K562 (cell line): ENCODE measurements at regions of chr1 and their contacts with region 1.

Region 1: DNA sequence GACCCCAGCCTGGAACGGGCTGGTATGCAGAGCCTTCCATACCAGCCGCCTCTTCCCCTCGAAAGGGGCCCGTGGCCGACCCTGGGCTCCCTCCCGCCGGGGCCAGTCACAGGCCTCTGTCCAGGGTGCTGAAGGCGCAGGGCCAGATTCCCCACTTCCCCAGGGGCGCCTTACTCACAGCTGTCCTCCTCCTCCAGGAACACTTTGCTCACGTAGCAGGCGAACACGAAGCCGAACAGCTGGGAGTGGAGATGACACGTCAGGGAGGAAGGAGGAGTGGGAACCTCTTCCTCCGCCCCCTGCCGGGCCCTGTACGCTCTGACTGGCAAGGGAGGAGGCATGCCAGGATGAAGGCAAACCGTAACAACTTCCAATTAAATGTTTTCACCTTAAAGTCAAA is 57.3 kb downstream of the NKAIN1 start:
- DNase-seq: peak; percentile 85 to 93 (median 89)
- ATAC-seq: peak; percentile 88
- H3K4me3 ChIP-seq: peak overlapping the region; percentile 37
- H3K27ac ChIP-seq: no peak overlapping the region
- H3K4me1 ChIP-seq: peaks cover 16% of the 10 kb centered on the region in 2 experiments; a peak in 4 of 5 replicates
- H3K27me3 ChIP-seq: peaks cover 21 to 28% of the 10 kb centered on the region in 2 experiments
- CTCF ChIP-seq: peak in 2 of 3 experiments; percentile 23 to 47; a peak in 3 of 6 replicates
- EP300 ChIP-seq: no peak
- POLR2A ChIP-seq: no peak
- RAD21 ChIP-seq: peak in 1 of 2 experiments; percentile 30; a peak in 2 of 4 replicates

Region 2: GRCh38 chr1:31161571-31161970 is 20.8 kb before region 1 on chr1:
- CTCF ChIA-PET with region 1: interaction called, 10 read pairs
- POLR2A ChIA-PET with region 1: interaction called, 4 read pairs
- in situ Hi-C with region 1: no loop called
- intact Hi-C with region 1: no loop called
- DNase-seq: peak in 1 of 4 experiments; percentile 17
- ATAC-seq: peak; percentile 25
- H3K4me3 ChIP-seq: no peak overlapping the region
- H3K27ac ChIP-seq: peak overlapping the region; percentile 31; the same call in 1 of the 3 replicates
- H3K4me1 ChIP-seq: peaks cover 27 to 37% of the 10 kb centered on the region in 2 experiments
- H3K27me3 ChIP-seq: no peaks in the 10 kb centered on the region
- CTCF ChIP-seq: no peak
- EP300 ChIP-seq: no peak
- POLR2A ChIP-seq: no peak
- RAD21 ChIP-seq: no peak

Region 3: DNA sequence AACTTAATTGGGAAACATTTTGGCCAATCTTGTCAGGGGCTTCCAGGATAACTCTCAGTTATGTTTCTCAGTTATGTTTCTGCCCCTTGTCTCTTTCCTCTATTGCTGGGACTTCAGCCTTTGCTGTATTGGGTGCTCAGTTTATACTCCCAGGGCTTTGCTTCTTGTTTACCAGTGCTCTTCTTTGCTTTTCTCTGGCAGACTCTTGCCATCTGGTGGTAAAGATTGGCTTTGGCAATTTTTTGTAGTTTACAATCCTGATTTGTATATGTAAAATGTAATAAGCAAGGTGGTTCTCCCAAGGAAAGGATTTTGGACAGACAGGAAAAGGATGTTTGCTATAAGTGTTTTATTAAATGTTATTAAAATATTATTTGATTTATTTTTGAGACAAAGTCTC is 152.7 kb after region 1 on chr1:
- CTCF ChIA-PET with region 1: interaction called, 11 read pairs
- POLR2A ChIA-PET with region 1: no interaction called
- in situ Hi-C with region 1: no loop called
- intact Hi-C with region 1: loop called (anchors 1 kb)
- DNase-seq: peak in 2 of 4 experiments; percentile 13 to 24
- ATAC-seq: peak; percentile 72
- H3K4me3 ChIP-seq: no peak overlapping the region
- H3K27ac ChIP-seq: no peak overlapping the region
- H3K4me1 ChIP-seq: no peaks in the 10 kb centered on the region
- H3K27me3 ChIP-seq: no peaks in the 10 kb centered on the region
- CTCF ChIP-seq: peak; percentile 46 to 69 (median 47); a peak in 5 of 6 replicates
- EP300 ChIP-seq: no peak
- POLR2A ChIP-seq: no peak
- RAD21 ChIP-seq: peak; percentile 45 to 63

Region 4: DNA sequence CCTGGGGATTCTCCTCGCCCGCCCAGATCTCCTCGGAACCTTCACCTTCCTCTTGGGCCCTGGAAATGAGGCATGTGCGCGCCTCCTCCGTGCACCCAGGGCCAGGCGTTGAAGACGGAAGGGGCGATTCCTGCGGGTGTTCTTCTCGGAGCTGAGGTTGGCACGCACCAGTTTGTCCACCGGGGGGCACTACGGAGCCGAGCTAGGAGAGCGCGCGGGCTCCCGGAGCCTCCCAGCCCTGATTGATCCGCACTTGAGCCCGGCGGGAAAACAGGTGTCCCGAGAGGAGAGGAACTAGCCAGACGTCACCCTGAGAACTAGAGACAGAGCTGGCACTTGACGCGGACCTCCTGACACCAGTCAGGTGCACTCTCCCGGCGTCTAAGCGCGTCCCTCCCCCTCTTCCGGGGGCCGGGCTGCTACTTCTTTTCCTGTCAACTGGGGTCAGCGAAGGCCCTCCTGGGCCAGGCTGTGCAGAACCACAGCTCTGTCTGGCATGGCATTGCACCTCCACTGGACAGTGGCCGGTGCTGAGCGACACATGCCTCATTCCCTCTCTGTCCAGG is 212.4 kb after region 1 on chr1:
- CTCF ChIA-PET with region 1: interaction called, 4 read pairs
- POLR2A ChIA-PET with region 1: no interaction called
- in situ Hi-C with region 1: no loop called
- intact Hi-C with region 1: loop called (anchors 10 kb)
- DNase-seq: peak; percentile 86 to 88 (median 87)
- ATAC-seq: peak; percentile 97
- H3K4me3 ChIP-seq: peak overlapping the region; percentile 33
- H3K27ac ChIP-seq: no peak overlapping the region
- H3K4me1 ChIP-seq: peaks cover 8 to 12% of the 10 kb centered on the region in 2 experiments; a peak in 4 of 5 replicates
- H3K27me3 ChIP-seq: peaks cover 2 to 16% of the 10 kb centered on the region in 2 experiments; a peak in 3 of 5 replicates
- CTCF ChIP-seq: peak; percentile 86 to 92 (median 92)
- EP300 ChIP-seq: no peak
- POLR2A ChIP-seq: no peak
- RAD21 ChIP-seq: peak; percentile 82 to 89

Region 5: GRCh38 chr1:31422505-31423319 is 240.4 kb after region 1 on chr1:
- CTCF ChIA-PET with region 1: interaction called, 54 read pairs
- POLR2A ChIA-PET with region 1: no interaction called
- in situ Hi-C with region 1: loop called (anchors 5 kb)
- intact Hi-C with region 1: loop called (anchors 1 kb)
- DNase-seq: peak; percentile 82 to 87 (median 83)
- ATAC-seq: peak; percentile 90
- H3K4me3 ChIP-seq: no peak overlapping the region
- H3K27ac ChIP-seq: no peak overlapping the region
- H3K4me1 ChIP-seq: peaks cover 0 to 12% of the 10 kb centered on the region in 2 experiments; a peak in 1 of 5 replicates
- H3K27me3 ChIP-seq: peaks cover 6 to 38% of the 10 kb centered on the region in 2 experiments; a peak in 3 of 5 replicates
- CTCF ChIP-seq: peak; percentile 92 to 99 (median 99)
- EP300 ChIP-seq: no peak
- POLR2A ChIP-seq: no peak
- RAD21 ChIP-seq: peak; percentile 97 to 98

Region 6: DNA sequence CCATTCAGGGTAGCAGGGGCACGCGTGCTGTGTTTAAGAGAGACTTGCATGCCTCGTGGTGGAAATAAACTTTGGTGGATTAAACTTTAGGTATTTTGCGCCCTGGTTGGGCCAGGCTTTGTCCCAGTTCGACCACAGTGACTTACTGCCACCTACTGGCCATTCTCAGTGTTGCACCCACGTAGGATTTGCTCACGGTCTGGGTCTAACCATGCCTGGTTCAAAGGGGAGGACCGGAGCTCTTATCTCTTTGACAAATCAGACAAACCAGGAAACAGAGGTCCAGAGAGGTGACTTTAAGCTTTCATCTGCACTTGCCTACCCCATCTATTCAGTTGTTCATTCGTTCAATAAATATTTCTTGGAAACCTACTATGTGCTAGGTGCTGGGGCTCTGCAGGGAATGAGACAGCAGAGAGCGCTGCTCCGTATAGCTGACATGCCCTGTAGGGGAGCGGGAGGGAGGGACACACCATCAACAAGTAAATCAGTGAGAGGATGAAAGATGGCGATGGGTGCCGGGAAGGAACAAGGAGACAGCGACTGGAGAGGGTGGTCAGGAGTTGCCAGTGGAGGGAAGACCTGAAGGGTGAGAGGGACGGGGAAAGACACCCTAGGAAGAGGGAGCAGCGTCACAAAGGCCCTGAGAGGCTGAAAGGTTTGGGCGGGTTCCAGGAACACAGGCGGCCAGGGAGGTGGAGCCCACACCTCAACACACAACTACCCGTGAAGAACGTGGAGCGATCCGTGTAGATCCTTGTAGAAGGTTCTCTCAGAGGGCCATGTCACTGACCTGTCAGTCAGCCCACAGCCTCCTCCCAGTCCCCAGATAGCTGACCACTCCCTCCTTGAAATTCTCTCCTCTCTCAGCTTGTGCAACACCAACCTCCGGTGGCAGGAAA is 366.8 kb after region 1 on chr1:
- CTCF ChIA-PET with region 1: interaction called, 3 read pairs
- POLR2A ChIA-PET with region 1: no interaction called
- in situ Hi-C with region 1: loop called (anchors 25 kb)
- intact Hi-C with region 1: loop called (anchors 2 kb)
- DNase-seq: peak; percentile 88 to 92 (median 90)
- ATAC-seq: peak; percentile 96
- H3K4me3 ChIP-seq: no peak overlapping the region
- H3K27ac ChIP-seq: no peak overlapping the region; the same call in 2 of the 3 replicates
- H3K4me1 ChIP-seq: peaks cover 13 to 15% of the 10 kb centered on the region in 2 experiments; a peak in 4 of 5 replicates
- H3K27me3 ChIP-seq: peaks cover 0 to 5% of the 10 kb centered on the region in 2 experiments; a peak in 1 of 5 replicates
- CTCF ChIP-seq: peak; percentile 89 to 99 (median 98)
- EP300 ChIP-seq: no peak
- POLR2A ChIP-seq: no peak
- RAD21 ChIP-seq: peak; percentile 98 to 99

Region 7: DNA sequence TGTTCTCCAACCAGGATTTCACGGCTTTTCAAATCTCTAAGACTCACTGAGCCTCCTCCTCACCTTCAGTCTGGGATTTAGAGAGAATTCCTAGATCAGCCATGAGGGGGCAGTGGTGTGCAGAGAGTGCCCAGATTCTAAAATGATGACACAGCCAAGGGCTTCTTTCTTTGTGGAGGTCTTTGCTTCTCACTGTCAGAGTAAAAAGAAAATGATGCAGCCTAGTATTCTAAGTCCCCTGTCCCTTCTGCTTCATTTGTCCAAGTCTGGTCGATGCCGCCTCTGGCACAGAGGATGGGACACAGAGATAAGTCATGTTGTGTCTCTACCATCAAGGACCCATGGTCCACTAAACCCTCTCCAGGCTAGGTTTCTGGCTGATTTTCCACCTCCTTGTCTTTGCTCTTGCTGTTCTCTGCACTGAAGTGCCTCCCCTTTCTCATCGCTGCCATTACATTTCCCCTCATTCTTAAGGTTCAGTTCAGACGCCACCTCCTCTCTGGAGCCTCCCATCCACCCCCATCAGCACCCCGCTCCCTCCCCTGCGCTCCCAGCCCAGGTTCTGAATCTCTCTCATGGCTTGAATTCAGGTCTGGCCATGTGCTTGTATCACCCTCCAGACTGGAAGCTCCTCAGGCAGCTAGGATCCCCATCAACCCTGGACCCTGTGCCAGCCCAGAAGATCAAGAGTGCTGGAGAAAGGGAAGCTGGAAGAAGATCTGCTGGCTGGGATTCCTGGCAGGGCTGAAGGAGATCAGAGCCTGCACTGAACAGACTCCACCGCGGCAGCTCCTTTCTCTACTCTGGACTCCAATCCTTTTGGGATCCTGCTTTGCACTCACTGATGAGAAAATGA is 382.0 kb after region 1 on chr1:
- CTCF ChIA-PET with region 1: no interaction called
- POLR2A ChIA-PET with region 1: no interaction called
- in situ Hi-C with region 1: loop called (anchors 25 kb)
- intact Hi-C with region 1: no loop called
- DNase-seq: peak; percentile 63 to 72 (median 66)
- ATAC-seq: peak; percentile 94
- H3K4me3 ChIP-seq: no peak overlapping the region
- H3K27ac ChIP-seq: no peak overlapping the region
- H3K4me1 ChIP-seq: no peaks in the 10 kb centered on the region
- H3K27me3 ChIP-seq: peaks cover 11 to 43% of the 10 kb centered on the region in 2 experiments
- CTCF ChIP-seq: peak; percentile 87 to 95 (median 87)
- EP300 ChIP-seq: no peak
- POLR2A ChIP-seq: no peak
- RAD21 ChIP-seq: peak; percentile 88 to 96

Region 8: GRCh38 chr1:32247983-32248889 is 1065.9 kb after region 1 on chr1:
- CTCF ChIA-PET with region 1: no interaction called
- POLR2A ChIA-PET with region 1: no interaction called
- in situ Hi-C with region 1: no loop called
- intact Hi-C with region 1: no loop called
- DNase-seq: peak; percentile 90 to 92 (median 92)
- ATAC-seq: peak; percentile 93
- H3K4me3 ChIP-seq: no peak overlapping the region
- H3K27ac ChIP-seq: no peak overlapping the region
- H3K4me1 ChIP-seq: peaks cover 27 to 33% of the 10 kb centered on the region in 2 experiments; a peak in 4 of 5 replicates
- H3K27me3 ChIP-seq: no peaks in the 10 kb centered on the region
- CTCF ChIP-seq: peak; percentile 94 to 97 (median 95)
- EP300 ChIP-seq: peak; percentile 31; the same call in 1 of the 2 replicates
- POLR2A ChIP-seq: no peak
- RAD21 ChIP-seq: peak; percentile 72 to 91